Activated naive CD4-positive, alpha-beta T cell treated with anti-CD3 and anti-CD28 coated beads for 36 hours (primary cell): ENCODE measurements at regions of chr12 and their contacts with region 1.

Region 1: GRCh38 chr12:52121824-52122539 is 42.5 kb downstream of the SMIM41 start:
- DNase-seq: peak; percentile 78
- H3K4me3 Mint-ChIP-seq: no peak overlapping the region
- H3K27ac Mint-ChIP-seq: no peak overlapping the region
- H3K4me1 Mint-ChIP-seq: peaks cover 11% of the 10 kb centered on the region
- H3K27me3 Mint-ChIP-seq: peaks cover 17% of the 10 kb centered on the region

Region 2: GRCh38 chr12:52004042-52004648 is 117.8 kb before region 1 on chr12:
- CTCF ChIA-PET with region 1: interaction called, 8 read pairs
- intact Hi-C with region 1: loop called (anchors 1 kb)
- DNase-seq: peak; percentile 43
- H3K4me3 Mint-ChIP-seq: no peak overlapping the region
- H3K27ac Mint-ChIP-seq: no peak overlapping the region
- H3K4me1 Mint-ChIP-seq: peaks cover 20% of the 10 kb centered on the region
- H3K27me3 Mint-ChIP-seq: peaks cover 3% of the 10 kb centered on the region

Region 3: DNA sequence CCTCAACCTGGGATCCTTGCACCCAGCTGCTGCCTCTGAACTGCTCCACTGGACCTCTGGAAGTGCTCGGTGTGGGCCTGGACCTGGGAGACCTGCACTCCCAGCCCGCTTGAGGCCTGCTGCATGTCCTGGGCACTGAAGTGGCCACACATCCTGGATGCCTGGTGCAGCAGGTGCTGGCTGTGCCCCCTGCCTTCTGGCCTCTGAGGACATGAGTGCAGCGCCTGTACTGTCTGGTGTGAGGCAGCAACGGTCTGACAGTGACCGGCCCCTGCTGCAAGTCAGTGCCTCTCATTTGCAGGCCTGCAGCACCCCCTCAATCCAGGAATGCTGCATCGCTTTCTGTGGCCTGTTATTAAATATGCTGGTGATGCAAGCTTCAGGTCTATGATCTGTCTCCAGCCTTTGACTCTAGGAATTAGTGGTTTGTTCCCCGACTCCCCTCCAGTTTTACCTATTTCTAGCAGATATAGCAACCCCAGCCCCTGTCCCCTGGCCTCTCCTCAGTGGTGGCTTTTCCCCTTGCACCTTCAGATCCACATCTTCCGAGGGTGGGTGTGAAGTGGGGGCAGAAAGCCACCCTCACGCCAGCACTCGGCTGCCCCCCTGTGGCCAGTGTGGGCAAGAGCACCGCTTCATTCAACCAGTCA is 38.9 kb before region 1 on chr12:
- CTCF ChIA-PET with region 1: interaction called, 5 read pairs
- intact Hi-C with region 1: loop called (anchors 2 kb)
- DNase-seq: peak; percentile 69
- H3K4me3 Mint-ChIP-seq: no peak overlapping the region
- H3K27ac Mint-ChIP-seq: no peak overlapping the region
- H3K4me1 Mint-ChIP-seq: peaks cover 10% of the 10 kb centered on the region
- H3K27me3 Mint-ChIP-seq: peaks cover 4% of the 10 kb centered on the region